ENCODE measurements at regions of chr2 and their contacts with region 1.

Region 1: GRCh38 chr2:69816923-69817542 is 12.4 kb upstream of the GMCL1 start:
- DNase-seq: peak; percentile 75
- ATAC-seq: peak; percentile 58
- H3K4me3 Mint-ChIP-seq: no peak overlapping the region
- H3K27ac Mint-ChIP-seq: no peak overlapping the region
- H3K4me1 Mint-ChIP-seq: peaks cover 13% of the 10 kb centered on the region
- H3K27me3 Mint-ChIP-seq: no peaks in the 10 kb centered on the region
- CTCF ChIP-seq: peak; percentile 91

Region 2: DNA sequence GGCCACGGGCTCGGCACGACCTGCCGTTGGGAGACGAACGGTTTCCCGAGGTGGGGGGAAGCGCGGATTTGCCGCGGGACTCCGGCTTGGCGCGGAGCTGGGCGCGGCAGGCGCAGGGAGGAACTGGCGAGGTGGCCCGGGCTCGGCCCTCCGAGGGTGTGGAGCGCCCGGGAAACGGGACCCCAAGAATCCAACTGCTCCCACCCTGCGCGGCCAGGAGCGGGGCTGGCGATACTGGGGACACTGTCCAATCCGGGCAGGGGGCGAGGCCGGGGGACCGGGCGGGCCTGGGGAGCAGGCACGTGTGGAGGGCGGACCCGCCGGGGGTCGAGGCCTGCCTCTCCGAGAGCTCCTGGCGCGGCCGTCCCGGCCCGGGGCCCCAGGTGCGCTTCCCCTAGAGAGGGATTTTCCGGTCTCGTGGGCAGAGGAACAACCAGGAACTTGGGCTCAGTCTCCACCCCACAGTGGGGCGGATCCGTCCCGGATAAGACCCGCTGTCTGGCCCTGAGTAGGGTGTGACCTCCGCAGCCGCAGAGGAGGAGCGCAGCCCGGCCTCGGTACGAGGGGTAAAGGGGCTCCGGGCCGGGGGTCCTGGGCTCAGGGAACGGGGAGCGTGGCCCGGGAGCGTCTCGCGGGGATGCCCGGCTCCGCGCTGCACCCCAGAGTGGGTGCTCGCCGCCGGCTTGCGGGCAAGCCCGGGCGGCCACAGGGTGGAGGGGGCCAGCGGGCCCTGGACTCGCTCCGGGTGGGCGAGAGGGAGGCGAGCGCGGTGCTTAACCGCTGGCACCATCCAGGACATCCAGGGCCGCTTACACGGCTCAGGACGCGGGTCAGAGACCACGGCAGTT is 75.2 kb before region 1 on chr2 and contains the start of gene ANXA4:
- CTCF ChIA-PET with region 1: interaction called, 36 read pairs
- POLR2A ChIA-PET with region 1: no interaction called
- DNase-seq: peak; percentile 67
- ATAC-seq: peak; percentile 73
- H3K4me3 Mint-ChIP-seq: peak within 1 kb of the TSS; percentile 83
- H3K27ac Mint-ChIP-seq: peak within 1 kb of the TSS; percentile 66
- H3K4me1 Mint-ChIP-seq: peaks cover 14% of the 10 kb centered on the region
- H3K27me3 Mint-ChIP-seq: peaks cover 28% of the 10 kb centered on the region
- CTCF ChIP-seq: no peak
- total RNA-seq, gene ANXA4: 9.5 to 13.6 TPM (median 12.3 TPM) in 3 replicates

Region 3: DNA sequence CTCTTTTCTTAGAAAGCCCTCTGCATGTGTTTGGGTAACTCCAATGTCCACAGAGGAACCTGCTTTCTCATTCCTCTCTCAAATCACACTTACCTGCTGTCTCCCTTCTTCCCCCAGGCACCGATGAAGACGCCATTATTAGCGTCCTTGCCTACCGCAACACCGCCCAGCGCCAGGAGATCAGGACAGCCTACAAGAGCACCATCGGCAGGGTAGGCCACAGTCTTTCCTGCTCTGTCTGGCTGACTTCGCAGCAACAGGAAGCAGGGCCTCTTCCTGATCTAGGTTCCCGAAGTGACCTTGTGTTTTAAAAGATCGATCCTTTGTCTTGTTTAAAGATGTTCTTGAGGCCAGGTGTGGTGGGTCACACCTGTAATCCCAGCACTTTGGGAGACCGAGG is 12.6 kb before region 1 on chr2:
- CTCF ChIA-PET with region 1: interaction called, 12 read pairs
- POLR2A ChIA-PET with region 1: interaction called, 3 read pairs
- DNase-seq: no peak
- ATAC-seq: no peak
- H3K4me3 Mint-ChIP-seq: no peak overlapping the region
- H3K27ac Mint-ChIP-seq: no peak overlapping the region; the same call in 1 of the 2 replicates
- H3K4me1 Mint-ChIP-seq: peaks cover 6% of the 10 kb centered on the region; the same call in 1 of the 2 replicates
- H3K27me3 Mint-ChIP-seq: no peaks in the 10 kb centered on the region
- CTCF ChIP-seq: no peak

Region 4: GRCh38 chr2:69829256-69830046 is 12.4 kb after region 1 on chr2 and contains the start of gene GMCL1:
- CTCF ChIA-PET with region 1: interaction called, 11 read pairs
- POLR2A ChIA-PET with region 1: no interaction called
- DNase-seq: peak; percentile 98
- ATAC-seq: peak; percentile 94
- H3K4me3 Mint-ChIP-seq: peak within 1 kb of the TSS; percentile 87
- H3K27ac Mint-ChIP-seq: peak within 1 kb of the TSS; percentile 96
- H3K4me1 Mint-ChIP-seq: peaks cover 21% of the 10 kb centered on the region
- H3K27me3 Mint-ChIP-seq: no peaks in the 10 kb centered on the region
- CTCF ChIP-seq: no peak
- total RNA-seq, gene GMCL1: 17.2 to 21.6 TPM (median 20.5 TPM) in 3 replicates